Activated T-helper 1 cell treated with anti-CD3 and anti-CD28 coated beads, Interleukin-12 subunit alpha, Interleukin-12 subunit beta, Interleukin-2, Interleukin-4 antibody, amounts not matched to agents 30 ng/mL and 10 ng/mL and 1 ng/mL, durations not matched to agents 14 hours and 24 hours and 36 hours (primary cell): ENCODE measurements at regions of chr13 and their contacts with region 1.

Region 1: DNA sequence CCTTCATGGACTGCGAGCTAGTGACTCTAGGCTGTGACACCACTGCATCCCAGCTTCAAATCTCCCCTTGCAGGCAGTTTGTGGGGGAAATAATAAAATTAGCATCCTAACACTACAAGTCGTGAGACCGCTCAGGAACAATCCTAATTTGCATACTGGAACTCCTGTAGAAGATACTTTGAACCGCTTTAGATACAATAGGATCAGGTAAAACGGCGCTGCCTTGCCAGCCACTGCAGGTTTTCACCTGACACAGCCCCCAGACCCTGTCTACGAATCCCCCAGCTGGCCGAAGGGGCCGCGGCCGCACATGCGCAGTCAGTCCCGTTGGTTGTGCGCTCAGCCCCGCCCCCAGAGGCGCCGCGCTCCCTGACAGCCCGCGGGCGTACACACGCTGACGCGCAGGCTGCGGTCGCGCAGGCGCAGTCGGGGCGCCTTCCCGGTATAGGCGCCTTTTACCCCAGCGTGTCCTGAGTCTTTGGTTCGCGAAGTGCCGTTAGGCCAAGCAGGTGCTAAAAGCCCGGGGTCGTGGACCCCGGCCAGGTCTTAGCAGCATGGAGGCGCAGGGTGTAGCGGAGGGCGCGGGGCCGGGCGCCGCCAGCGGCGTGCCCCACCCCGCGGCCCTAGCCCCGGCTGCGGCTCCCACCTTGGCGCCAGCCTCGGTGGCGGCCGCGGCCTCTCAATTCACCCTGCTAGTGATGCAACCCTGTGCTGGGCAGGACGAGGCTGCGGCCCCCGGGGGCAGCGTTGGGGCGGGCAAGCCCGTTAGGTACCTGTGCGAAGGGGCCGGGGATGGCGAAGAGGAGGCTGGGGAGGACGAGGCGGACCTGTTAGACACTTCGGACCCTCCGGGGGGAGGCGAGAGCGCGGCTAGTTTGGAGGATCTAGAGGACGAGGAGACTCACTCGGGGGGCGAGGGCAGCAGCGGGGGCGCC is at the start of gene RFXAP:
- DNase-seq: peak; percentile 89
- H3K4me3 Mint-ChIP-seq: peak within 1 kb of the TSS; percentile 96
- H3K27ac Mint-ChIP-seq: peak within 1 kb of the TSS; percentile 92
- H3K4me1 Mint-ChIP-seq: peaks cover 60% of the 10 kb centered on the region
- H3K27me3 Mint-ChIP-seq: peaks cover 8% of the 10 kb centered on the region
- total RNA-seq, gene RFXAP: 19.0 and 19.8 TPM in 2 replicates

Region 2: GRCh38 chr13:36183901-36184300 is 635.2 kb before region 1 on chr13:
- intact Hi-C with region 1: no loop called
- DNase-seq: no peak
- H3K4me3 Mint-ChIP-seq: no peak overlapping the region
- H3K27ac Mint-ChIP-seq: no peak overlapping the region
- H3K4me1 Mint-ChIP-seq: no peaks in the 10 kb centered on the region
- H3K27me3 Mint-ChIP-seq: no peaks in the 10 kb centered on the region

Region 3: GRCh38 chr13:36848199-36848982 is 29.3 kb after region 1 on chr13:
- intact Hi-C with region 1: loop called (anchors 2 kb)
- DNase-seq: no peak
- H3K4me3 Mint-ChIP-seq: no peak overlapping the region
- H3K27ac Mint-ChIP-seq: no peak overlapping the region
- H3K4me1 Mint-ChIP-seq: no peaks in the 10 kb centered on the region
- H3K27me3 Mint-ChIP-seq: no peaks in the 10 kb centered on the region

Region 4: DNA sequence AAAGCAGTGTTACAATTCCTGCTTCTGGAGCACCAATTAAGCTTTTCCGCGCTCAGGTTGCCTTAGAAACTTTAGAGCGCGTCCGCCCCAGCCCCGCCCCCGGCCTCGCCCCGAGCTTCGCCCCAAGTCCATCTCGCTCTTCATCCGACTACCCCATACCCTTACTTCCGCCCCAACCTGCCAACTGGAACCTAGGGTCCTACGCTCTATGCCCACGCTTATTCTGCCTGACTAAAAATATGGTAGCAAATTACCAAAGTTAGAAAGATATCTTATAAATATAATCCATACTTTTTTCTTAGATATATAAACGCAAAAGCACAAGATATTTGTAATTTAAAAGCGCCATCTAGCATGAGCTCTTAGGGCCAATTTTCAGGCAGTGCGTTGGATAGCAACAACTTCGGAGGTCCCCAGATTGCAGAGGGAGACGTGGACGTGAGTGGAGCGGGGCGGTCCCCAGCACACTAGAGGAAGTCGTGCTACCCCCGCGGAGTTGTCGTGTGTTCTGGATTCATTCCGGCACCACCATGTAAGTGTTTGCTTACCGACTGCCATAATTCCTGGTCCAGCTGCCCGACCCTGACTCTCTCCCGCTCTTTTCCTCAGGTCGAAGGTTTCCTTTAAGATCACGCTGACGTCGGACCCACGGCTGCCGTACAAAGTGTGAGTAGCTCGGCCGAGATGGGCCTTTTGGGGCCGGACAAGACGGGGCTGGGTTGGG is 1530.5 kb after region 1 on chr13 and contains the start of gene UFM1:
- intact Hi-C with region 1: loop called (anchors 1 kb)
- DNase-seq: peak; percentile 81
- H3K4me3 Mint-ChIP-seq: peak within 1 kb of the TSS; percentile 98
- H3K27ac Mint-ChIP-seq: peak within 1 kb of the TSS; percentile 100
- H3K4me1 Mint-ChIP-seq: peaks cover 36% of the 10 kb centered on the region
- H3K27me3 Mint-ChIP-seq: peaks cover 3% of the 10 kb centered on the region
- total RNA-seq, gene UFM1: 66.9 and 71.3 TPM in 2 replicates